ENCODE measurements at regions of chr5 and their contacts with region 1.

Region 1: DNA sequence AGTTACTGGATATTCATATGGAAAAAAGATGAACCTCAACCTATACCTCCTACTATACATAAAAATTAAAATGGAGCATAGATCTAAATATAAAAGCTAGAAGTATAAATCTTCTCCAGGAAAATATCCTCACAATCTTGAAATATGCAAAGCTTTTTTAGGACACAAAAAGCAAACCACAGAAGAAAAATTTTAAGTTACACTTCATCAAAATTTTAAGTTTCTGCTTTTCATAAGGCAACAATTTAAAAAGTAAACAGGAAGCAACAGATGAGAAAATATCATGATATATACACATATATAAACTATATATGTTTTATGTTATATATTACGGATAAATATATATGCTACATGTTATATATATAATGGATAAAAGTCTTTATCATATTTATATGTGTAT is 157.5 kb downstream of the ADAMTS6 start:
- DNase-seq: no peak

Region 2: GRCh38 chr5:65307088-65307487 is 17.1 kb before region 1 on chr5:
- intact Hi-C with region 1: loop called (anchors 1 kb)
- DNase-seq: no peak

Region 3: DNA sequence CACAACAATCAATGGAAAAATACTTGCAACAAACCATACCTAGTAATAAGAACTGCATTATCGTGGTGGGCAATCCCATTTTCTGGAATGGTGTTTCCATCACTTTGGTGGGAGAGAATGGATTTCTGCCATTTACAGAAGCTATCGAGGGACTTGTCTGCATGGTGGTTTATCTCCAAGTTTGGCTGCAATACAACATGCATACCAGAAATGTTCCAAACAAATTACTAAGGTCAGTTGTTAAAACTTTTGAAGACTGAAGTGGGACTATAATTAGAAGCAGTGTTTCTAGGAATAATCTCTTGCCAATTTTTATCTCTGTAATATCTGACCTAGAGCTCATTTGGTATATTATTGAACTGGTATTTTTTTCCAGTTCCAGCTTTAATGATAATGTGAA is 127.2 kb after region 1 on chr5:
- intact Hi-C with region 1: no loop called
- DNase-seq: no peak

Region 4: DNA sequence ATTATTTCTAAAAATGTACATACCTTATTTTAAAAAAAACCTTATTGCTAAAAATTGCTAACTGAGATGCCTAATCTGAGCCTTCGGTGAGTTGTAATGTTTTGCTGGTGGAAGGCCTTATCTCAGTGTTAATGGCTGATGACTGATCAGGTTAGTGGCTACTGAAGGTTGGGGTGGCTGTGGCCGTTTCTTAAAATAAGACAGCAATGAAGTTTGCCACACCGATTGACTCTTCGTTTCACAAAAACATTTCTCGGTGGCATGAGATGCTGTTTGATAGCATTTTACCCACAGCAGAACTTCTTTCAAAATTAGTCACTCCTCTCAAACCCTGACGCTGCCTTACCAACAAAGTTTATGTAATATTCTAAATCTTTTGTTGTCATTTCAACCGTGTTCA is 224.1 kb after region 1 on chr5:
- intact Hi-C with region 1: no loop called
- DNase-seq: no peak